ENCODE measurements at regions of chr3 and their contacts with region 1.

Region 1: GRCh38 chr3:48151058-48151806 is 37.0 kb downstream of the CDC25A start:
- DNase-seq: peak; percentile 85
- CTCF ChIP-seq: peak; percentile 88

Region 2: GRCh38 chr3:47824541-47825473 is 326.4 kb before region 1 on chr3:
- CTCF ChIA-PET with region 1: interaction called, 51 read pairs
- POLR2A ChIA-PET with region 1: no interaction called
- DNase-seq: peak; percentile 96
- CTCF ChIP-seq: peak; percentile 96

Region 3: DNA sequence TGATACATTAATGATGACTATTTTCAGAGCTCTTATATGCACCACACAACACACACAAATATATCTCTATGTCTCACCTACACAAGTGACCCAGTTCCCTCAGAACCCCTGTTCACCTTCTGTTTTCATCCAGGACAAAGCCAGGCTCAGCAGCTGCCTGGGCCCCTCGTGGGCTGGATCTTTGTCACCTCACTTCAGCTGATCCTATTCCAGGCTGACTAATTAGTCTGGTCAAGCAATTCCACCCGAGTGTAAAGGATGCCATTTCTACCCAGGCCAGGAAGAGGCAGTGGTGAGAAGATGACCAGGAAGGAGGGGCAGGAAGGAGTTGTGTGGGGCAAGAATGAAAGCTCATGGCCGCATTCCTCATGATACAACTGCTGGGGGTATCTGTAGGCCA is 286.0 kb before region 1 on chr3:
- CTCF ChIA-PET with region 1: interaction called, 13 read pairs
- POLR2A ChIA-PET with region 1: no interaction called
- DNase-seq: no peak
- CTCF ChIP-seq: no peak

Region 4: DNA sequence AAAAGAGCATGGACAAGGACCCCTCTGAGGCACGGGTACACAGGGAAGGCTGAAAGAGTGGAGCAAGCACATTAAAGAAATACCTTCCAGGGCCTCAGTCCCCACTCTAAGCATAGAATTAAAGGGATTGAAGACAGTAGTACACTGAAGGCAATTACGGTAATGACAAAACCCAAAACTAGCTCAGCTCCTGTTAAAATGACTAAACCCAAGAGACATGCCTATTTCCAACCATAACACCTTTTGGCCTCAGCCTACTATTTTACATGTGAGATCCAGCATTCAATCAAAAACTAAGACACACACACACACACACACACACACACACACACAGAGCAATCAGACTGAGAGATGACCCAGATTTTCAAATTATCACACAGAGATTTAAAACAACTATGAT is 154.8 kb before region 1 on chr3:
- CTCF ChIA-PET with region 1: interaction called, 11 read pairs
- POLR2A ChIA-PET with region 1: no interaction called
- DNase-seq: no peak
- CTCF ChIP-seq: no peak

Region 5: GRCh38 chr3:48130321-48130904 is 20.8 kb before region 1 on chr3:
- CTCF ChIA-PET with region 1: interaction called, 11 read pairs
- POLR2A ChIA-PET with region 1: no interaction called
- DNase-seq: no peak
- CTCF ChIP-seq: no peak

Region 6: DNA sequence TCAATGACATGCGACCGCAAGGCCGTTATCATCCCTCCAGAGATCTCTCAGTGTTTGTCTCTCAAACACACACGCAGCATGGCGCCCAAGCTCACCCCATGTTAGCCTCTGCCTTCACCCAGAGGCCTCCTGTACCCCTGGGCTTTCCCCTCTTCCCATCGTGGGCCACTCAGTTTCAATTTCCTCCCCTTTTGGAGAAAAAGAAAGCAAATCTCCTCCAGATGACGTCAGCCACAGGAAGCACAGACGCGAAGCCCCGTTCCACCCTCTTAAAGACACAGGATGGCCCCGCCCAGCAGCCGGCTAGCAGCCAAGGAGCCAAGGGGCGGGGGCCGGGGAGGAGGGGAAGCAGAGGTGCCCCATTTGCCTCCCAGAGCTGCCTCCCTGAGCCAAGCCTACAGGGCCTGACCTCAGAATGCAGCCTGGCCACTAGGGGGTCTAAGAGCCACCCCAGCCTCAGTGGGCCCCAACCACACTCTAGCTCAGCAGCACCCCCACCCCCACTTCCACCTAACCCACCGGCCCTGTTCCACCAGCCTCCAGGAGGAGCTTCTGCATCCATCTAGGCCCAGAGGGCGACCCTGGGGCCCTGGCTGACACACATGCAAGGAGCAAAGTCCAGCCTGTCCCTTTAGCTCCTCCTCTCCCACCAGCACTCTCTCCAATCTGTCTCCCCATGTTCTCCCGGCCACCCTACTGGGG is 321.8 kb after region 1 on chr3:
- CTCF ChIA-PET with region 1: no interaction called
- POLR2A ChIA-PET with region 1: no interaction called
- DNase-seq: peak; percentile 95
- CTCF ChIP-seq: peak; percentile 24

Measured in GM10248 (cell line).